MCF 10A (cell line): ENCODE measurements at regions of chr4 and their contacts with region 1.

Region 1: GRCh38 chr4:189265515-189265914 is 675.2 kb upstream of the FRG1 start:
- DNase-seq: no peak
- H3K4me3 Mint-ChIP-seq: no peak overlapping the region
- H3K27ac Mint-ChIP-seq: no peak overlapping the region
- H3K4me1 Mint-ChIP-seq: peaks cover 10% of the 10 kb centered on the region
- H3K27me3 Mint-ChIP-seq: no peaks in the 10 kb centered on the region
- CTCF ChIP-seq: no peak

Region 2: DNA sequence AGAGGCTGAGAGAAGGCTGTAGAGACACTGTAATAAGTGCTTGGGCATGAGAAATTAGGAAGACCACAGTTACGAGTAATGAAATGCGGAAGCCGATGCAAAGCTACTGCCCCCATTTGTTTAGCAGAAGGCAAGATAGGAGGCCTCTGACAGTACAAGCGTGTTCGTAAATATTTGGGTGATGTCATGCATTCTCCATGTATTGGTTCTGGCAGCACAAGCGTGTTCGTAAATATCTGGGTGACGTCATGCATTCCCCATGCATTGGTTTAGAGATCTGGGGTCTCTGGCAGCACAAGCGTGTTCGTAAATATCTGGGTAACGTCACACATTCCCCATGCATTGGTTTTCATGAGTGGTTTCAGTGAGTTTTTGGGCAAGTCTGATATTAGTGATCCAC is 13.7 kb after region 1 on chr4:
- CTCF ChIA-PET with region 1: interaction called, 3 read pairs
- POLR2A ChIA-PET with region 1: no interaction called
- intact Hi-C with region 1: loop called (anchors 1 kb)
- DNase-seq: no peak
- H3K4me3 Mint-ChIP-seq: no peak overlapping the region
- H3K27ac Mint-ChIP-seq: no peak overlapping the region
- H3K4me1 Mint-ChIP-seq: peaks cover 9% of the 10 kb centered on the region
- H3K27me3 Mint-ChIP-seq: no peaks in the 10 kb centered on the region
- CTCF ChIP-seq: no peak

Region 3: DNA sequence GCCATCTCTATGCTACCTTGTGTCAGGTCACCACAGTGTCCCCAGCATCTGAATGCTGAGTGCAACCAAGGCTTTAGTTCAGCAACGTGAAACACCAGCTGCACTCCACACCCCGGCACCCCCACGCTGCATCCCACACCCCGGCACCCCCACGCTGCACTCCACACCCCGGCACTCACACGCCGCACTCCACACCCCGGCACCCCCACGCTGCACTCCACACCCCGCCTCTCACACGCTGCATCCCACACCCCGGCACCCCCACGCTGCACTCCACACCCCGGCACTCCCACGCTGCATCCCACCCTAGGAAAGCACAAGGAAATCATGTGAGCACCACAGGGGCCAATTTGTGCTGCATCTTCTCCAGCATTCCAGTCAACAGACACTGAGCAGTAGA is 475.4 kb after region 1 on chr4:
- CTCF ChIA-PET with region 1: no interaction called
- POLR2A ChIA-PET with region 1: no interaction called
- intact Hi-C with region 1: no loop called
- DNase-seq: no peak
- H3K4me3 Mint-ChIP-seq: no peak overlapping the region
- H3K27ac Mint-ChIP-seq: no peak overlapping the region
- H3K4me1 Mint-ChIP-seq: no peaks in the 10 kb centered on the region
- H3K27me3 Mint-ChIP-seq: no peaks in the 10 kb centered on the region
- CTCF ChIP-seq: no peak